ENCODE measurements at regions of chr7 and their contacts with region 1.

Region 1: GRCh38 chr7:143131781-143132180 is at the start of gene PIP:
- DNase-seq: no peak
- CTCF ChIP-seq: no peak

Region 2: DNA sequence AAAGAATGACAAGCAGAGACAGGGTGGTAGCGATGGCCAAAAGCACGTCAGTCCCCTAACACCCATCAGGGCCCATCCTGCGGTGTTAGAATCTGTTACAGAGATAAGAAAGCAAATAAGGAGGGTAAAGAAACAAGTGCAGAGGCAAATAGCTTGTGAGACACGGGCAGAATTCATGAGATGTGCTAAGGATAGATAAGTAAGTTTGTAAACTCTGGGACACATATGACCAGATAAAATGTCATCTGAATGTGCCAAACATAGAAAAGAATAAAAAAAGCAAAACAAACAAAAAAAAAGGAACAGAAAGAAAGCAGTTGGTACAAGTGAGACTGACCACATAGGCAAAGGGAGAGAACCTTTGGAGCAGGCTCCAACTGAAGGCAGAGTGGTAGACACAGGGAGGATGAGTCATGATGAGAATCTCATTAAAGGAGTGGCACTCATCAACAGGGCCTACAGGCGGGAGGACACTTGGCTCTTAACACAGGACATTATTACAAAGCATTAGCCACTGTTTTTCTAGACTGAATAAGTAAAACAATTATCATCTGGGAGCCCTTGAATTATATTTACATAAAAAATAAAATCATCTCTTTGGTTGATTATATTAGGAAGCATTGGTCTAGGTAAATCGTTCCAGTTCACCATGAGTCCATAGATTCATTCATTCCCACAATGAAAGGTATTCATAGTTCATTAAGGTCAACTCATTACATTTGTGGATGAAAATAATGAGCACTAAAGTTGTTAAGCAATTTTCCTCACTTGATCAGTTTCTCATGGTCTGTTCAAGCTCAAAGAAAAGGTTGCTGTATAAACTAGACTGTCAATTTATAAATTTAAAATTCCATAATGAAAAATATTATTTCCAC is 298.4 kb before region 1 on chr7:
- CTCF ChIA-PET with region 1: no interaction called
- POLR2A ChIA-PET with region 1: no interaction called
- DNase-seq: no peak
- CTCF ChIP-seq: no peak

Region 3: DNA sequence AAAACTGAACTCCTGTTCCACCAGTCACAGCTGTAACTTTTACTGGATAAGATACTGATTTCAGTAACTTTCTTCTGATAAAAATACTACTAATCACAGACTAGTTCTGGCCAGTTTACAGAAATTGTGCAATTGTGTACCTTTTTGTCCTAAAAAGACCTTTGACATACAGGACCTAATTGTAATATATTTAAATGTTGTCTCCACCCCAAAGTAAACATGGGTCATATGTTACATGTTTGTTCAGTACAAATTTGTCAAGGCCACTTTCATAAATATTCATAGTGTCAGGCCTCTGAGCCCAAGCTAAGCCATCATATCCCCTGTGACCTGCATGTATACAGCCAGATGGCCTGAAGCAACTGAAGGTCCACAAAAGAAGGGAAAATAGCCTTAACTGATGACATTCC is 26.9 kb before region 1 on chr7:
- CTCF ChIA-PET with region 1: no interaction called
- POLR2A ChIA-PET with region 1: no interaction called
- DNase-seq: no peak
- CTCF ChIP-seq: no peak

Region 4: GRCh38 chr7:143120696-143121405 is 10.9 kb before region 1 on chr7:
- CTCF ChIA-PET with region 1: interaction called, 13 read pairs
- POLR2A ChIA-PET with region 1: no interaction called
- DNase-seq: no peak
- CTCF ChIP-seq: no peak